Sigmoid colon (tissue), 7 donors: ENCODE measurements at regions of chr10 and their contacts with region 1.

Region 1: GRCh38 chr10:69639291-69640195 is 9.5 kb downstream of the FAM241B start:
- DNase-seq: peak; percentile 41
- H3K4me3 ChIP-seq: no peak overlapping the region
- H3K27ac ChIP-seq: no peak overlapping the region
- H3K4me1 ChIP-seq: no peaks in the 10 kb centered on the region
- H3K27me3 ChIP-seq: peaks cover 0 to 4% (median 0%) of the 10 kb centered on the region in 3 donors
- CTCF ChIP-seq: peak; percentile 63 to 84 (median 76)
- EP300 ChIP-seq: no peak
- POLR2A ChIP-seq: no peak

Region 2: GRCh38 chr10:69237528-69238159 is 401.9 kb before region 1 on chr10:
- intact Hi-C with region 1: loop called (anchors 5 kb)
- DNase-seq: peak; percentile 93
- H3K4me3 ChIP-seq: no peak overlapping the region
- H3K27ac ChIP-seq: no peak overlapping the region
- H3K4me1 ChIP-seq: peaks cover 0 to 12% (median 0%) of the 10 kb centered on the region in 4 donors
- H3K27me3 ChIP-seq: no peaks in the 10 kb centered on the region
- CTCF ChIP-seq: peak; percentile 82 to 98 (median 92)
- EP300 ChIP-seq: no peak
- POLR2A ChIP-seq: no peak

Region 3: DNA sequence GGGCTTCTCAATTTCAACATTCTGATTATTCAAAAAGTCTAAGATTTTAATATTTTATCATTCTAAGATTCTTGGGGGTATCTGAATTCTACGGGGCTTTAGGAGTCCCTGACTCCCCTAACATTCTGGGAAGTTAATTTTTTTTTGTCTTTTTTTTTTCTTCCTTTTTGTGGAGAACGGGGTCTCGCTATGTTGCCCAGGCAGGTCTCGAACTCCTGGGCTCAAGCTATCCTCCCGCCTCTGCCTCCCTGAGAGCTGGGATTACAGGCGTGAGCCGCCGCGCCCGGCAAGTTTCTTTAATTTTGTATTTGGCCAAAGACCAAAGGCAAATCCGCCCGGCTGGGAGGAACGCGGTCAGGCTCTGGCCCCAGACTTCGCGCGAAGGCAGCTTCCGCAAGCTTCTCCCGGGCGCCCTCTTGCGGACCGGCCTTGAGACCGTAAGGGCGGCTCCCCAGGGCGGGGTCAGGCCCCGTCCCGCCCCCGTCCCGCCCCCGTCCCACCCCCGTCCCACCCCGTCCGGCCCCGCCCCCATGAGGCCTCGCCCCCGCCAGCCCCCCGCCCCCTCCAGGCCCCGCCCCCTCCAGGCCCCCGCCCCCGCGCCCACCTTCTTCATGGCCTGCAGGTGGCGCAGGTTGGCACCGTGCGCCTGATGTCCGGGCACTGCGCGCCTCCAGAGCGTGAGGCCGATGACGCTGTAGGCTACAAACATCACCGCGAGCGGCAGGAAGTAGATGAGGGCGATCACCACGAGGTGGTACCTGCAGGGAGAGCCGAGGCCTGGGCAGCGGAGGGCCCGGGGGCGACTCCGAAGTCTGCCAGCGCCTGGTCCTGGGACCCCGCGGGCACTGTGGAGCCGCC is 231.0 kb before region 1 on chr10:
- intact Hi-C with region 1: loop called (anchors 10 kb)
- DNase-seq: peak; percentile 98
- H3K4me3 ChIP-seq: peak overlapping the region; percentile 14 to 44 (median 39)
- H3K27ac ChIP-seq: peak overlapping the region; percentile 88 to 97 (median 94)
- H3K4me1 ChIP-seq: peaks cover 0 to 94% (median 76%) of the 10 kb centered on the region in 4 donors
- H3K27me3 ChIP-seq: no peaks in the 10 kb centered on the region
- CTCF ChIP-seq: peak in 2 of 4 experiments; percentile 43 to 79
- EP300 ChIP-seq: peak in 1 of 4 donors; percentile 54
- POLR2A ChIP-seq: no peak

Region 4: GRCh38 chr10:69515699-69516259 is 123.8 kb before region 1 on chr10:
- intact Hi-C with region 1: loop called (anchors 2 kb)
- DNase-seq: peak; percentile 79
- H3K4me3 ChIP-seq: no peak overlapping the region
- H3K27ac ChIP-seq: no peak overlapping the region
- H3K4me1 ChIP-seq: no peaks in the 10 kb centered on the region
- H3K27me3 ChIP-seq: no peaks in the 10 kb centered on the region
- CTCF ChIP-seq: peak; percentile 28 to 64 (median 56)
- EP300 ChIP-seq: no peak
- POLR2A ChIP-seq: no peak

Region 5: DNA sequence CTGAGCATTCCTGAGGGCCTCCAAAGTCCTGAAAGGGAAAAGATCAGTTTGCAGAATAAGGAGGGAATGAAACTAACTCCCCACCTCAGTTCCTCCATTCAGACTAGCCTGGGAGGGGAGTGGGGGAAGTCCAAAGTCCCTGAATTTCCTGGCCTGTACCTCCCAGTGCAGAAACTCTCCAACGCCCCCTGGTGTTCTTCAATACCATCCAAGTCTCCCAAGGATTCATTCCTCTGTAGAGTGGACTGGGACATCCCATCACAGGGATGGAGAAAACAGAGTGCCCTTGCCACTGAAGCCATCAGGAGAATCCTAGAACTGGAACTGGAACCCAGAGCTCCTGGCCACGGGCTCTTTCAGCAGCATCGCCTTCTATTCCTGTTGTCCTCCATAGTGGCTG is 160.6 kb after region 1 on chr10:
- intact Hi-C with region 1: loop called (anchors 10 kb)
- DNase-seq: no peak
- H3K4me3 ChIP-seq: no peak overlapping the region
- H3K27ac ChIP-seq: no peak overlapping the region
- H3K4me1 ChIP-seq: peaks cover 0 to 26% (median 21%) of the 10 kb centered on the region in 4 donors
- H3K27me3 ChIP-seq: peaks cover 0 to 26% (median 21%) of the 10 kb centered on the region in 3 donors
- CTCF ChIP-seq: peak in 2 of 4 experiments; percentile 17 to 42
- EP300 ChIP-seq: no peak
- POLR2A ChIP-seq: no peak